ENCODE measurements at regions of chr19 and their contacts with region 1.

Region 1: GRCh38 chr19:44741841-44742352 is 6.6 kb upstream of the BCL3 start:
- DNase-seq: peak; percentile 99
- H3K4me3 ChIP-seq: no peak overlapping the region
- H3K27ac ChIP-seq: peak overlapping the region; percentile 89 to 98 (median 93)
- H3K4me1 ChIP-seq: peaks cover 0 to 73% (median 68%) of the 10 kb centered on the region in 4 donors
- H3K27me3 ChIP-seq: no peaks in the 10 kb centered on the region
- CTCF ChIP-seq: no peak
- EP300 ChIP-seq: peak; percentile 41 to 96 (median 64)
- POLR2A ChIP-seq: peak in 1 of 2 donors; percentile 30

Region 2: DNA sequence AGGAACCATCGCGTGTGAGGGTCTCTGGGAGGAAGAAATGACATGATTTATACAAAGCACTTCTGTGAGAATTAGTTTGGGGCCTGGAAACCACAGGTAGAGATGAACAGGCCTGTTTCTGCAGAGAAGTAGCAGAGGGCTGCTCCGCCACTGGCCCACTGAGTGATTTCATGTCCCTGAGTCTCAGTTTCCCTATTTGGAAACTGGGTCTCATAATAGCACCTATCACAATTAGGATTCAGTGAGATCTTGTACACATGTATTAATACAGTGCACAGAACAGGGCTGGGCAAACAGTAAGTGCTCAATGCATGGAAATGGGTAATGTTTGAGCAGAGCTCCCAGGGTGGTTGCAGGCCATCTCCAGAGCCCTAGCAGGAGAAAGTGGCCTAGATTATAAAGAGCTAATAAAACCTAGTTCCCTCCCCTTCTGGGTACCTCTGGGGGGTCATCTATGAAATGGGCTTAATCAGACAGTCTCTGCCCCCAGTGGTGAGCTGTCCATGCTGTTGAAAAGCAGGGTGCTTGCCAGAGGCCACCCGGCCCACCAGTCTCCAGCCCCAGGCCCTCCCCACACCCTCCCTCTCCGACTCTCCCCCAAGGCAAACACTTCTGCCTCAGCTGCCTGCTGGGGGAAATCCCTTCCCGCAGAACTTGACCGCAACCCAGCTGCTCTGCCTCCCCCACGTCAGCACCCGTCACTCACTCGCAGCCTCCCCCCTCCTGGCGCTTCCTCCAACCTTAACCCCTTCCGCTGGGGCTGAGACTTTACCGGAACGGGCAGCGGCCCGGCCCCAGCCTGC is 11.1 kb after region 1 on chr19:
- intact Hi-C with region 1: loop called (anchors 2 kb)
- DNase-seq: peak; percentile 94
- H3K4me3 ChIP-seq: peak overlapping the region; percentile 22 to 72 (median 45)
- H3K27ac ChIP-seq: peak overlapping the region; percentile 87 to 94 (median 91)
- H3K4me1 ChIP-seq: peaks cover 0 to 94% (median 89%) of the 10 kb centered on the region in 4 donors
- H3K27me3 ChIP-seq: no peaks in the 10 kb centered on the region
- CTCF ChIP-seq: no peak
- EP300 ChIP-seq: peak in 3 of 4 donors; percentile 42 to 86 (median 86)
- POLR2A ChIP-seq: peak in 1 of 2 donors; percentile 30

Measured in sigmoid colon (tissue), 7 donors.